H1 (cell line): ENCODE measurements at regions of chr12 and their contacts with region 1.

Region 1: DNA sequence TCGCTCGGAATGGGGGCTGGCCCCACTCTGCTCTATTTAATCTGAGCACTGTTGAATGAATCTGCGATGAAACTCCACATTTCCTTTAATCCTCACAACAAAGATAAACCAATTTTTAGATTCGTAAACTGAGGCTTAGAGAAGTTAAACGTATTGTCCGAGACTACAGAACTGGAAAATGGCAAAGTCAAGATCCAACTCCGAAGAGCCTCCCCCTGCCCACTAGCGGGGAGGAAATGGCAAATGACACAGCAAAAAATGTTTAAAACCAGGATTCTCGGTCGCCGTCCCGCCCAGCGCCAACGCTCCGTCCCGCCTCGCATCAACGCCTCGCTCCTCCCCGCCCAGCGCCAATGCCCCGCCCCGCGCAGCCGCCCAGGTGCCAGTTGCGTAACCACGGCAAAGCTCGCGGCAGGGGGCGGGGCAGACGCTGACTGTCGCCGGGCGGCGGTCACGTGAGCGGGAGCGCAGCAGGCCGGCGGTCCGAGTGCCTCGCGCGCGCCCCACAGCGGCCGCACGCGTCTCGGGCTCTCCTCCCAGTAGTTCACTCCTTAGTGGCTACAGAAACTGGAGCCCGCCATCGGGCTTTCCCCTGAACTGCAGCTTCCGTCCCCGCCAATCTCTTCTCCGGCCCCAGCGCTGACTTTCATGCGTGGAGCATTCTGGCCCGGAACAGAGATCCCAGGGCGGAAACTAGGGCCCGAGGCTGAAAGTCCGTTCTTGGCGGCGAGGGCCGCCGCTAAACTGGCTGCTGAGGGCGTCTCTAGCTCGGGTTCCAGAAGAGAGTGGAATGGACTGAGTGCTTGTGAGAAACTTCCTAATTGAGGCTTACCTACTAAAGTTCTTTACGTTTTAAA is 13.6 kb upstream of the LRRC23 start:
- DNase-seq: peak; percentile 92 to 99
- H3K4me3 ChIP-seq: peak overlapping the region; percentile 31 to 63 (median 56)
- H3K27ac ChIP-seq: peak overlapping the region; percentile 76
- H3K4me1 ChIP-seq: peaks cover 0 to 9% (median 2%) of the 10 kb centered on the region in 4 experiments; a peak in 4 of 7 replicates
- H3K27me3 ChIP-seq: no peaks in the 10 kb centered on the region
- CTCF ChIP-seq: peak; percentile 72 to 96 (median 78)
- EP300 ChIP-seq: peak in 1 of 2 experiments; percentile 61; a peak in 1 of 3 replicates
- POLR2A ChIP-seq: peak; percentile 71 to 84
- RAD21 ChIP-seq: peak; percentile 42 to 61

Region 2: GRCh38 chr12:6839482-6840201 is 51.4 kb before region 1 on chr12:
- CTCF ChIA-PET with region 1: no interaction called
- POLR2A ChIA-PET with region 1: no interaction called
- DNase-seq: no peak
- H3K4me3 ChIP-seq: no peak overlapping the region
- H3K27ac ChIP-seq: no peak overlapping the region
- H3K4me1 ChIP-seq: peaks cover 0 to 3% (median 2%) of the 10 kb centered on the region in 4 experiments; a peak in 1 of 7 replicates
- H3K27me3 ChIP-seq: no peaks in the 10 kb centered on the region
- CTCF ChIP-seq: no peak
- EP300 ChIP-seq: no peak
- POLR2A ChIP-seq: no peak
- RAD21 ChIP-seq: no peak

Region 3: GRCh38 chr12:6904280-6905278 is 13.6 kb after region 1 on chr12 and contains the start of gene LRRC23:
- CTCF ChIA-PET with region 1: interaction called, 9 read pairs
- POLR2A ChIA-PET with region 1: interaction called, 22 read pairs
- DNase-seq: peak; percentile 96 to 98
- H3K4me3 ChIP-seq: peak within 1 kb of the TSS; percentile 46 to 64 (median 52)
- H3K27ac ChIP-seq: peak within 1 kb of the TSS; percentile 76
- H3K4me1 ChIP-seq: peaks cover 3 to 12% (median 11%) of the 10 kb centered on the region in 4 experiments; a peak in 5 of 7 replicates
- H3K27me3 ChIP-seq: peaks cover 0 to 4% (median 0%) of the 10 kb centered on the region in 4 experiments; a peak in 4 of 7 replicates
- CTCF ChIP-seq: no peak
- EP300 ChIP-seq: peak in 1 of 2 experiments; percentile 72; a peak in 1 of 3 replicates
- POLR2A ChIP-seq: peak in 1 of 2 experiments; percentile 76; a peak in 1 of 3 replicates
- RAD21 ChIP-seq: no peak
- total RNA-seq, gene LRRC23: 2.5 and 2.9 TPM in 2 replicates

Region 4: DNA sequence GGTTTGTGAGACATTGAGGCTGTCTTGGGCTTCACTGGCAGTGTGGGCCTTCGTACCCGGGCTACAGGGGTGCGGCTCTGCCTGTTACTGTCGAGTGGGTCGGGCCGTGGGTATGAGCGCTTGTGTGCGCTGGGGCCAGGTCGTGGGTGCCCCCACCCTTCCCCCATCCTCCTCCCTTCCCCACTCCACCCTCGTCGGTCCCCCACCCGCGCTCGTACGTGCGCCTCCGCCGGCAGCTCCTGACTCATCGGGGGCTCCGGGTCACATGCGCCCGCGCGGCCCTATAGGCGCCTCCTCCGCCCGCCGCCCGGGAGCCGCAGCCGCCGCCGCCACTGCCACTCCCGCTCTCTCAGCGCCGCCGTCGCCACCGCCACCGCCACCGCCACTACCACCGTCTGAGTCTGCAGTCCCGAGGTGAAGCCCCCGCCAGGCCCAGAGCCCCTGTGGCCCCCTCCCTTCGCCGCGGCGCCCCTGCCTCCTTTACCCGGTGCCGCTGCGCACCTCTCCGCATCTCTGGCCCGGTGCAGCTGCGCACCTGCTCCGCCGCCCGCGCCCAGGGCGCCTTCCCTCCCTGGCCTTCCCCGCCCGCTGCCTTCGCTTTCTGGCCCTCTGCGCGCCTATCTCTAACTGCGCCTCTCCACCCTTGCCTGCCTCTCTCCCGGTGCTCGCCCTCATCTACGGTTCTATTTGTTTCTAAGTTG is 23.4 kb after region 1 on chr12 and contains the start of gene ENO2:
- CTCF ChIA-PET with region 1: interaction called, 15 read pairs
- POLR2A ChIA-PET with region 1: interaction called, 9 read pairs
- DNase-seq: peak in 1 of 2 experiments; percentile 72
- H3K4me3 ChIP-seq: peak within 1 kb of the TSS; percentile 67 to 86 (median 78)
- H3K27ac ChIP-seq: 0 out of 2 replicates have a peak within 1 kb of the TSS, but pooled peaks have one; percentile 26
- H3K4me1 ChIP-seq: peaks cover 0 to 18% (median 9%) of the 10 kb centered on the region in 4 experiments; a peak in 6 of 7 replicates
- H3K27me3 ChIP-seq: no peaks in the 10 kb centered on the region
- CTCF ChIP-seq: no peak
- EP300 ChIP-seq: no peak
- POLR2A ChIP-seq: no peak
- RAD21 ChIP-seq: no peak
- total RNA-seq, gene ENO2: 90.9 and 92.4 TPM in 2 replicates